HEK293 (cell line): ENCODE measurements at regions of chr5 and their contacts with region 1.

Region 1: GRCh38 chr5:141557681-141558136 is 61.1 kb downstream of the DIAPH1 start:
- H3K4me3 ChIP-seq: no peak overlapping the region
- H3K27ac ChIP-seq: no peak overlapping the region
- H3K4me1 ChIP-seq: no peaks in the 10 kb centered on the region
- CTCF ChIP-seq: peak; percentile 49

Region 2: GRCh38 chr5:141234109-141234667 is 323.5 kb before region 1 on chr5:
- CTCF ChIA-PET with region 1: interaction called, 12 read pairs
- POLR2A ChIA-PET with region 1: no interaction called
- H3K4me3 ChIP-seq: peak overlapping the region; percentile 33
- H3K27ac ChIP-seq: no peak overlapping the region
- H3K4me1 ChIP-seq: no peaks in the 10 kb centered on the region
- CTCF ChIP-seq: no peak

Region 3: DNA sequence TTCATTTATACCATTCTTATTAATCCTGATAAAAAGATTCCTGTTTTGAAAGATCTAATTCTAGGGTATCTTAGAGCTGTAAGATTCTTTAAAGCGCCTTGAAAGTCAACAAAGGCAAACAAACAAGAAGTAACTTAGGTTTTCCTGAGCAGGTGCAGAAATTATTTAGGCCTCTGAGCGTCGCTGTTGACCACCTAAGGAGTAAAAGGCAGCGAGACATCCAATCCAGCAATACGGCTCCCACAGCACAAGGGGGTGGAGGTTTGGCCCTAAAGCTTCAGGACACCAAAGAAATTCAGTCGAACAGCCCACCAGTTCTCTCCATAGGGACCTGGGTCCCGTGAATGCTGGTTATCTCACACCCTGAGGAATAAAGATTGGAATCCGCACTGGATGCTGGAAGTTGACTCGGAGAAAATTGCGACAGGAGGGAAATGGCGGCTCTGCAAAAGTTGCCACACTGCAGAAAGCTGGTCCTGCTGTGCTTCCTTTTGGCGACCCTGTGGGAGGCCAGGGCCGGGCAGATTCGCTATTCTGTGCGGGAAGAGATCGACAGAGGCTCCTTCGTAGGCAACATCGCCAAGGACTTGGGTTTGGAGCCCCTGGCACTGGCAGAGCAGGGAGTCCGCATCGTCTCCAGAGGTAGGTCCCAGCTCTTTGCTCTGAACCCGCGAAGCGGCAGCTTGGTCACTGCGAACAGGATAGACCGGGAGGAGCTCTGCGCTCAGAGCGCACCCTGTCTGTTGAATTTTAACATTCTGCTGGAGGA is 219.0 kb before region 1 on chr5 and contains the start of gene PCDHGA2:
- CTCF ChIA-PET with region 1: interaction called, 20 read pairs
- POLR2A ChIA-PET with region 1: no interaction called
- H3K4me3 ChIP-seq: no peak within 1 kb of the TSS
- H3K27ac ChIP-seq: no peak within 1 kb of the TSS
- H3K4me1 ChIP-seq: no peaks in the 10 kb centered on the region
- CTCF ChIP-seq: no peak

Region 4: GRCh38 chr5:141387233-141387949 is 170.3 kb before region 1 on chr5 and contains the start of gene PCDHGB4:
- CTCF ChIA-PET with region 1: interaction called, 11 read pairs
- POLR2A ChIA-PET with region 1: no interaction called
- H3K4me3 ChIP-seq: no peak within 1 kb of the TSS
- H3K27ac ChIP-seq: no peak within 1 kb of the TSS
- H3K4me1 ChIP-seq: no peaks in the 10 kb centered on the region
- CTCF ChIP-seq: no peak

Region 5: GRCh38 chr5:141420855-141421496 is 136.7 kb before region 1 on chr5 and contains the start of gene PCDHGA11:
- CTCF ChIA-PET with region 1: interaction called, 116 read pairs
- POLR2A ChIA-PET with region 1: no interaction called
- H3K4me3 ChIP-seq: peak within 1 kb of the TSS; percentile 67
- H3K27ac ChIP-seq: no peak within 1 kb of the TSS
- H3K4me1 ChIP-seq: no peaks in the 10 kb centered on the region
- CTCF ChIP-seq: peak; percentile 59

Region 6: GRCh38 chr5:141465351-141465750 is 92.4 kb before region 1 on chr5:
- CTCF ChIA-PET with region 1: no interaction called
- POLR2A ChIA-PET with region 1: no interaction called
- H3K4me3 ChIP-seq: no peak overlapping the region
- H3K27ac ChIP-seq: no peak overlapping the region
- H3K4me1 ChIP-seq: no peaks in the 10 kb centered on the region
- CTCF ChIP-seq: no peak

Region 7: GRCh38 chr5:141512390-141512910 is 45.3 kb before region 1 on chr5:
- CTCF ChIA-PET with region 1: interaction called, 10 read pairs
- POLR2A ChIA-PET with region 1: no interaction called
- H3K4me3 ChIP-seq: no peak overlapping the region
- H3K27ac ChIP-seq: no peak overlapping the region
- H3K4me1 ChIP-seq: no peaks in the 10 kb centered on the region; the same call in 1 of the 2 replicates
- CTCF ChIP-seq: peak; percentile 68

Region 8: DNA sequence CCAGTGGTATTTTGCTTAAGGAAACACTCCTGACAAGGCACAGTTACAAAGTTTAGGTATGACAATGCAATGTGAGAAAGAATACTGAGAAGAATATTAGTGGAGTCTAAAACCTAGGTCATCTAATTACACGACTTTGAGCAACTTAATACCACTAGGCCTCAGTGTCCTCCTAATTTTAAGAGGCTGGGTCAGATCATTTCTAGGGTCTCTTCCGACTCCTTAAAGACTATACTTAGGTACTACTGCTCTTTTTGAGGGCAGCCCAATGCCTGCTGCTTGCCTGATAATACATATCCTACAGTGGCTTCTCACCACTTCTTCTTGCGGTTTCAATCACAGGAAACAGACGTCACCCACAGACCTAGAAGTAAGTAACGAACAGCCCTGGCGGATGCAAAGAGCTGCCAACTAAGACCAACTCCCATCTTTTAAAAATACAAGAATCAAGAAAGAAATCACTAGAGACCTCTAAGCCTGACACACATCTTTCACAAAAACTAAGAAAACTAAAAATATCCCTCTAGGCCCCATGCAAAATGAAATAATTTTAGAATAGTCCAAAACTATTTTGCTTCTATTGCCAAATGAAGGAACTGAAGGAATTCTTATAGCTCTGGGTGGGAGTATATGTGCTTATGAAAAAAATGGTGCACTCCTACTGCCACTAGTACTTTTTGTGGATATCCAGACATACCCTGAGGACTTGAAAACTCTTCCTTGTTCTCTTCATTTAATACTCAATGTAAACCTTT is 48.0 kb after region 1 on chr5:
- CTCF ChIA-PET with region 1: no interaction called
- POLR2A ChIA-PET with region 1: no interaction called
- H3K4me3 ChIP-seq: no peak overlapping the region
- H3K27ac ChIP-seq: no peak overlapping the region
- H3K4me1 ChIP-seq: 0 out of 2 replicates have a peak, but pooled peaks cover 4% of the 10 kb centered on the region
- CTCF ChIP-seq: no peak

Region 9: DNA sequence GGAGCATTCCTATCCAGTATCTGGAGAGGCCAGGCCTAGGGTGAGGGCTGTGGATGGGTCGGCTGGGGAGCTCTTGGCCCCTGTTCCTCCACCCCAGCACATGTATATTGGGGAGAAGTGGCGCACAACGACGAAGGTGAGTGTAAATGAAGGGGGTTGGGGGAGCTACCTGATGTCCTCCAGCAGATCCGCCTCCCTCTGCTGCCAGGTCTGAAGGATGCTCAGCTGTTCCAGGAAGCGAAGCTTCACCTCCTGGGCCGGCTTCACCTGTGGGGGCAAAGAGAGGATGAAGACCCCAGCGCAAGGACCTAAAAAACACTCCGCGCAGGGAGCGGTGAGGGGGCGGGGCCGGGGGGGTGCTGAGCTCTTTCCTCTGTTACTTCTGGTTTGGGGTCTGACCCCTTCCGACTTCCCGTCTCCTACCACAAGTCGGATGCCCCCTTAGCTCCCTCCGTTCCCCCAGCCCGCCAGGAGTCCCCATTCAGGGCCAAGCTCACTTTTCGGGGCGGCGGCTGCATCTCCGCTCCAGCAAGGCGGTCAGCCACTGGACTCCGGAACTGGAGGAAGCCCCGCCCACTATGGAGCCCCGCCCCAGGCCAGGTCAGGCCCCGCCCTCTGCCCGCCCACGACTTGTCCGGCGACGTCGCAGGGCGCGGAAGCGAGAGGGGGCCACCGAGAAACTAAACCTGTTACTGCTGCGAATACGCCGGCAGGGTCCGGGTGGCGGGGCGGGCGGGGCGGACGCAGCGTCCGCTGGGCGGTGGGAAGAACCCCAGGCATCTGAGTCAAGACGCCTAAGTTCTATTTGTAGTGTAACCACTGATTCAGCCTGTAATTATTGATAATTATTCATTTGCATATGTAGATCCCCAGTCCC is 93.4 kb after region 1 on chr5 and contains the start of gene FCHSD1:
- CTCF ChIA-PET with region 1: no interaction called
- POLR2A ChIA-PET with region 1: no interaction called
- H3K4me3 ChIP-seq: peak within 1 kb of the TSS; percentile 52
- H3K27ac ChIP-seq: no peak within 1 kb of the TSS
- H3K4me1 ChIP-seq: no peaks in the 10 kb centered on the region
- CTCF ChIP-seq: no peak

Region 10: GRCh38 chr5:141747152-141748141 is 189.7 kb after region 1 on chr5:
- CTCF ChIA-PET with region 1: no interaction called
- POLR2A ChIA-PET with region 1: no interaction called
- H3K4me3 ChIP-seq: no peak overlapping the region
- H3K27ac ChIP-seq: no peak overlapping the region
- H3K4me1 ChIP-seq: 0 out of 2 replicates have a peak, but pooled peaks cover 5% of the 10 kb centered on the region
- CTCF ChIP-seq: no peak